ENCODE measurements at regions of chr1 and their contacts with region 1.

Region 1: GRCh38 chr1:109640285-109640865 is 15.5 kb upstream of the GSTM4 start:
- DNase-seq: peak; percentile 65 to 97 (median 91)

Region 2: DNA sequence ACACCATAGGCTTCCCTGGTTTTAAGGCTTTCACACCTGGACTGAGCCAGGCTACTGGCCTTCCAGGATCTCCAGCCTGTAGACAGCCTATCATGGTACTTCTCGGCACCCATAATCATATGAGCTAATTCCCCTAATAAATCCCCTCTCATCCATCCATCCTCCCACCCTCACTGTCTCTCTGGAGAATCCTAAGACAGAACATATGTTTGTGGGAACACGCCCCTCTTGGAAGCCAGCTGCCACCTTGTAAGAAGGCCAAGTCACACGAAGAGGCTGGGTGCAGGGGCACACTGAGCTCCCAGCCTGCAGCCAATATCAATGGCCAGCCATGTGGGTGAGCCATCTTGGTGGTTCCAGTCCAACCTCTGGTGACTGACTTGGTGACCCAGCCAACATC is 684.5 kb before region 1 on chr1:
- intact Hi-C with region 1: no loop called
- DNase-seq: no peak

Region 3: GRCh38 chr1:109773146-109773899 is 132.9 kb after region 1 on chr1:
- intact Hi-C with region 1: loop called (anchors 1 kb)
- DNase-seq: peak; percentile 69 to 98 (median 85)